ENCODE measurements at regions of chr14 and their contacts with region 1.

Region 1: DNA sequence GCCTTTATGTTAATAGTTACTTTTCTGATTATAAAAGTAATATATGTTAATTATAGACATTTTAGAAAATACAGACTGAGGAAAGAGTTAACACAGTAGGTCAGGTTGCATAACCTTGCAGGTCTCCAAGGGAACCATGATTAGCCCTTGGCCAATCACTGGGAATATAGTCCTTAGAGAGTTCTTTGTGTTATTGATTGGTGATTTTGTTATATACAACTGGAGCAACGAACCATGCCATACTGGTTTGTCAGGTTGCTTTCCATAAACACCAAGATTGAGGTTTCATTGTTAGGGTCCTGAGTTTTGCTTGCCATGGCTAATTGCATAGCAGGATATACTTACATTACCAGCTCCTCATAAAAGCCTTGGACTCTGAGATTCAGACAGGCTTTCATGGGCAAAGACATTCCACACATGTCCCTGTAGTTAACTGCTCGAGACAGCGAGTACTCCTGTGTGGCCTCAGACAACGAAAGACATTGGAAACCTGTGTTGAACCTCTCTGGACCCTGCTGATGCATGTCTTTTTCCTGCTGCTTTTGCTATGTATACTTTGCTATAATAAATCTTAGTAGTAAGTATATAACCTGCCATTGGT is 33.7 kb downstream of the MAPK1IP1L start:
- DNase-seq: no peak
- ATAC-seq: no peak
- H3K4me3 ChIP-seq: no peak overlapping the region
- H3K27ac ChIP-seq: no peak overlapping the region
- H3K4me1 ChIP-seq: no peaks in the 10 kb centered on the region
- H3K27me3 ChIP-seq: no peaks in the 10 kb centered on the region
- CTCF ChIP-seq: no peak
- EP300 ChIP-seq: no peak
- POLR2A ChIP-seq: no peak
- RAD21 ChIP-seq: no peak

Region 2: DNA sequence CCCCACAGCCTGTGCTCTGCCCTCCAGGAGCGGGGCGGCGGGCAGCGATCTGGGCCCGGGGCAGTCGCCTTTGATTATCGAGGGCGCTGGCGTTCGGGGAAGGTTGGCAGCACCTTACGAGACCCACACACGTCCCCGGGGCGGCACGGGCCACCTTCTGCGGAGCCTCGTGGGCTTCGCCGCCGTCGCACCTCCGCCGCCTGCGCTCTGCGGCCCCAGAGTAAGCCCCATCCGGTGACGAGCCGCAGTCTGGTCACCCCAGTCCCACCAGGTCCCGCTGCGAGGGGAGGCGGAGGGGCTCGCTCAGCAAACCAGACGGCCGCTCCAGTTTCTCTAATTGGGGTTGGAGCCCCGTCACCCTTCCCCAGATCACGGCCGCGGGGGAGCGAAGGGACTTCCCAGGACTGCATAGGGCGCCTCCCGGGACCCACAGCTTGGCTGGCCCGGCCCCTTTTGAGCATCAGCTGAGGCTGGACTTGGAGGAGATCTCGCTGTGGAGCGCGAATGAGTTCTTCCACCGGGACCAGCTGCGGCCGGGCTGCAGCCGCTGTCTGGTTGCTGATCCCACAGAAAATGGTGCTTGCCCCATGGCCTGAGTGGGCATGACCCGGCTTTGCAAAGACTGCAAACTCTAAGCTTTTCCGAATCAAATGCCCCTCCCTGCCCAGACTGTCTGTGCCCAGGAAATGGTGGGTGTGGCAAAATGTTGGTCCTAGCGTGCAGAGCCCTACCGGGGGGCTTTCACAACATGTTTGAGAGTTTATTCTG is 44.5 kb after region 1 on chr14:
- CTCF ChIA-PET with region 1: interaction called, 4 read pairs
- POLR2A ChIA-PET with region 1: no interaction called
- in situ Hi-C with region 1: no loop called
- intact Hi-C with region 1: loop called (anchors 5 kb)
- DNase-seq: peak in 2 of 4 experiments; percentile 17 to 18
- ATAC-seq: peak; percentile 41
- H3K4me3 ChIP-seq: peak overlapping the region; percentile 45
- H3K27ac ChIP-seq: no peak overlapping the region
- H3K4me1 ChIP-seq: peaks cover 0 to 13% of the 10 kb centered on the region in 2 experiments; a peak in 3 of 5 replicates
- H3K27me3 ChIP-seq: no peaks in the 10 kb centered on the region
- CTCF ChIP-seq: no peak
- EP300 ChIP-seq: no peak
- POLR2A ChIP-seq: no peak
- RAD21 ChIP-seq: no peak

Region 3: DNA sequence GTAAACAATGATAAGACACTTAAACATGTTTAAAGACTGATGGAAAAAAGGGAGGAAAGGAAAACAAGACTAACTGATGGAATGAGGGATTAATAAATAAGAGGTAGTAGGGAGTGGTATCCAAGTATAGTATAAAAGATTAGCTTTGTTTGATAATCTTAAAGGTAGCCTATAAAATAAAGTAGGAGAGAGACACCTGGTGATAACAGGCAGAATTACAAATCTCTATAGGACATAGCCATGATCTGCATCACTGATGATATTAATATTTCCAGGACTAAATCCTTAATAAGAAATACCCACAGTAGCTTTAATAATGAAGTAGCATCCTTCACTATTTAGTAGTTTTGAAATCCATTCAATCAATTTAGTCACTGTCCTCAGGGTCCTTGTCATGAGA is 75.8 kb after region 1 on chr14:
- CTCF ChIA-PET with region 1: interaction called, 11 read pairs
- POLR2A ChIA-PET with region 1: no interaction called
- in situ Hi-C with region 1: loop called (anchors 5 kb)
- intact Hi-C with region 1: loop called (anchors 1 kb)
- DNase-seq: peak in 1 of 4 experiments; percentile 5
- ATAC-seq: no peak
- H3K4me3 ChIP-seq: no peak overlapping the region
- H3K27ac ChIP-seq: no peak overlapping the region
- H3K4me1 ChIP-seq: no peaks in the 10 kb centered on the region
- H3K27me3 ChIP-seq: no peaks in the 10 kb centered on the region
- CTCF ChIP-seq: peak in 1 of 3 experiments; percentile 45; a peak in 2 of 6 replicates
- EP300 ChIP-seq: no peak
- POLR2A ChIP-seq: no peak
- RAD21 ChIP-seq: peak; percentile 66 to 73

Measured in K562 (cell line).